Activated CD4-positive, alpha-beta T cell treated with anti-CD3 and anti-CD28 coated beads for 36 hours (primary cell): ENCODE measurements at regions of chrX and their contacts with region 1.

Region 1: GRCh38 chrX:79412972-79413371 is 45.8 kb upstream of the ITM2A start:
- DNase-seq: no peak
- ATAC-seq: no peak
- H3K4me3 Mint-ChIP-seq: peak overlapping the region; percentile 69
- H3K27ac Mint-ChIP-seq: peak overlapping the region; percentile 60
- H3K4me1 Mint-ChIP-seq: peaks cover 25% of the 10 kb centered on the region
- H3K27me3 Mint-ChIP-seq: no peaks in the 10 kb centered on the region

Region 2: GRCh38 chrX:78555401-78555980 is 857.5 kb before region 1 on chrX:
- CTCF ChIA-PET with region 1: no interaction called
- POLR2A ChIA-PET with region 1: no interaction called
- intact Hi-C with region 1: loop called (anchors 2 kb)
- DNase-seq: no peak
- ATAC-seq: no peak
- H3K4me3 Mint-ChIP-seq: no peak overlapping the region
- H3K27ac Mint-ChIP-seq: no peak overlapping the region
- H3K4me1 Mint-ChIP-seq: peaks cover 2% of the 10 kb centered on the region
- H3K27me3 Mint-ChIP-seq: no peaks in the 10 kb centered on the region

Region 3: DNA sequence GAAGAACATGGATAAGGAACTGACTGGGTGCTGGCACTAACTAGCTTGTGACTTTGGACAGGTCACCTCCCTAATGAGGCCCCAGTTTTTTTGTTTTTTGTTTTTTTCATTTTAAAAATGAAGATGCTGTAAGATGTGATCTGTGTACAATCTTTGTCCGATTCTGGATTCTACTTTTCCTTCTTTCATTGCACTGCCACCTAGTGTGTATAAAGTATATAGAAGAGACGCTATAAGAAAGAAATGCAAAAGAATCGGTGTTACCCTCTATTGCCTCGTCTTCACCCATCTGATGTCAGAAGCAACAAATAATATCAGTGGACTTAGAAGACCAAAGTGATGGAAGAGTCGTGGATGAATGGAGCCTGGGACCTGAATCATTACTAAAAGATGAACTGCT is 526.4 kb before region 1 on chrX:
- CTCF ChIA-PET with region 1: no interaction called
- POLR2A ChIA-PET with region 1: no interaction called
- intact Hi-C with region 1: loop called in 1 of 2 experiments (anchors 10 kb)
- DNase-seq: no peak
- ATAC-seq: peak; percentile 61
- H3K4me3 Mint-ChIP-seq: no peak overlapping the region
- H3K27ac Mint-ChIP-seq: peak overlapping the region; percentile 47
- H3K4me1 Mint-ChIP-seq: peaks cover 7% of the 10 kb centered on the region
- H3K27me3 Mint-ChIP-seq: no peaks in the 10 kb centered on the region

Region 4: DNA sequence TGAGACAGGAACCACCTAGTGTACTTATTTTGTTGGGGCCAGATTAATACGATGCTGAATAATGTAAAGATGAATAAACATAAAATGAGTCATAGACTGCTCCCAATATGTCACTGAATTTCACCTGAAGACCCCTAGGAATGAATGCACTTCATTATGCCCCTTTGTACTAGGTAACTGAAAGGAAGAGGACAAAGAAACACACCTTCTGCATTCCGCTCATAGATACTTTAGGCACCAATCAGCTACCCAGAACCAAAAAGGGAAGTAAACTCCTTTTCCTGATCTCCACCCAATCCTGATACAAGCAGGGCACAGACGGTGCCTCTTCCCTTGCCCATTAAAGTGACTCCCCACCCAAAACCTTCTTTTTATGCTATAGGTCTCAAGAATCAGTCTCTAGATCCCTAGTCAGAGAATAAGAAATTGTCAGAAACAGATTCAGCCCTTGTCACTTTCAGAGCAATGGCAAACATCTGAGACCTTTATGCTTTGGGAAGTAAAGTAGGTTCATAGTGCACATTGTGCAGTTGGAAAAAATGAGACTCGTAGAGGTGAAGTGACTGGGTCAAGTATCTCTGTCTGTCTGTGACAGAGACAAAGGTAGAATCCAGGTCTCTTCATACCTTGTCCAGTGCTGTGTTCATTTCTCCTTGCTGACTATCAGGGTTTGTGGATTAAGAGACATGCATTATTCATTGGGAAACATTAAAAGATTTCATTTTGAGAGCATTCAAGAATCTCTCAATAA is 266.2 kb before region 1 on chrX:
- CTCF ChIA-PET with region 1: no interaction called
- POLR2A ChIA-PET with region 1: no interaction called
- intact Hi-C with region 1: loop called (anchors 5 to 10 kb)
- DNase-seq: no peak
- ATAC-seq: peak; percentile 52
- H3K4me3 Mint-ChIP-seq: peak overlapping the region; percentile 88
- H3K27ac Mint-ChIP-seq: peak overlapping the region; percentile 97
- H3K4me1 Mint-ChIP-seq: peaks cover 33% of the 10 kb centered on the region
- H3K27me3 Mint-ChIP-seq: no peaks in the 10 kb centered on the region

Region 5: DNA sequence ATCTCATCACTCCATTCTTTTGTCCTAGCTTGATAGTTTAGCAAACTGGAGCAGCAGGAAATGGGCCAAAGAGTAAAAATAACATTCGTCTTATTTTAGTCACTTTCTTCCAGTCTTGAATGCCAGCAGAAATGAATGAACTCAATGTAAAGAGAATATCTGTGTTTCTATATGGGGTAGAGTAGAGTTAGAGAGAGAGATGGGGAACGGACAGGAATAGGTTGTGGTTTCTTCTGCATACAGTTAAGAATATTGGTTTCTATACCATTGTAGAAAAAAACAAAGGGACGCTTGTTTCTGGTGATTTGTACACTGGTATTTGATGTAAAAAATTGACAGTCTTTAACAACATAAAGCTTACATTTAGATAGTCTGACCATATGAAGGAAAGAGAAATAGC is 259.6 kb before region 1 on chrX:
- CTCF ChIA-PET with region 1: no interaction called
- POLR2A ChIA-PET with region 1: no interaction called
- intact Hi-C with region 1: loop called (anchors 5 to 10 kb)
- DNase-seq: no peak
- ATAC-seq: no peak
- H3K4me3 Mint-ChIP-seq: peak overlapping the region; percentile 67
- H3K27ac Mint-ChIP-seq: peak overlapping the region; percentile 89
- H3K4me1 Mint-ChIP-seq: peaks cover 58% of the 10 kb centered on the region
- H3K27me3 Mint-ChIP-seq: no peaks in the 10 kb centered on the region

Region 6: DNA sequence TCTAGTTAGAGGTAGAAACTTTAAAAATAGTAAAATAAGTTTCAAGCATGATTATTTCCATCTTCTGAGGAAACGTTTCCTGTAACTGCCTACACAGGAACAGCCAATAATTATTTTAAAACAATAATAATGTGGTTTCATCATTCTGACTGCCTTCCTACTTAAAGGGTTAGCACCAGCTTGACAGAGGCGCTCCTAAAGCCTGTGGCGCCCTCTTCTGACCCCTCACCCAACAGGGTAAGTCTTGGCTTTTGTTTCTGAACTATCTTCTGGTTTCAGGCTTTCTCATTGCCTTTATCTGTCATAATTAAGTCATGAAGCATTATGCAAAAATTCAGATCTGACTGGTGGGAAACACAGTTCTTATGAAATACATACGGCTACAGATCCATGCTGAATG is 142.6 kb before region 1 on chrX:
- CTCF ChIA-PET with region 1: interaction called, 10 read pairs
- POLR2A ChIA-PET with region 1: no interaction called
- intact Hi-C with region 1: loop called (anchors 2 kb)
- DNase-seq: peak; percentile 87
- ATAC-seq: peak; percentile 99
- H3K4me3 Mint-ChIP-seq: no peak overlapping the region
- H3K27ac Mint-ChIP-seq: peak overlapping the region; percentile 47
- H3K4me1 Mint-ChIP-seq: peaks cover 44% of the 10 kb centered on the region
- H3K27me3 Mint-ChIP-seq: no peaks in the 10 kb centered on the region

Region 7: GRCh38 chrX:79400623-79401022 is 12.3 kb before region 1 on chrX:
- CTCF ChIA-PET with region 1: no interaction called
- POLR2A ChIA-PET with region 1: no interaction called
- intact Hi-C with region 1: no loop called
- DNase-seq: no peak
- ATAC-seq: no peak
- H3K4me3 Mint-ChIP-seq: no peak overlapping the region
- H3K27ac Mint-ChIP-seq: peak overlapping the region; percentile 60
- H3K4me1 Mint-ChIP-seq: peaks cover 5% of the 10 kb centered on the region
- H3K27me3 Mint-ChIP-seq: no peaks in the 10 kb centered on the region